Activated CD4-positive, alpha-beta T cell treated with anti-CD3 and anti-CD28 coated beads, Interleukin-2, amount 10 ng/mL, durations not matched to agents 24 days and 14 days (primary cell): ENCODE measurements at regions of chr1 and their contacts with region 1.

Region 1: GRCh38 chr1:32063261-32063681 is 9.5 kb upstream of the TMEM39B start:
- DNase-seq: no peak
- H3K4me3 Mint-ChIP-seq: no peak overlapping the region
- H3K27ac Mint-ChIP-seq: no peak overlapping the region
- H3K4me1 Mint-ChIP-seq: peaks cover 13% of the 10 kb centered on the region
- H3K27me3 Mint-ChIP-seq: no peaks in the 10 kb centered on the region

Region 2: DNA sequence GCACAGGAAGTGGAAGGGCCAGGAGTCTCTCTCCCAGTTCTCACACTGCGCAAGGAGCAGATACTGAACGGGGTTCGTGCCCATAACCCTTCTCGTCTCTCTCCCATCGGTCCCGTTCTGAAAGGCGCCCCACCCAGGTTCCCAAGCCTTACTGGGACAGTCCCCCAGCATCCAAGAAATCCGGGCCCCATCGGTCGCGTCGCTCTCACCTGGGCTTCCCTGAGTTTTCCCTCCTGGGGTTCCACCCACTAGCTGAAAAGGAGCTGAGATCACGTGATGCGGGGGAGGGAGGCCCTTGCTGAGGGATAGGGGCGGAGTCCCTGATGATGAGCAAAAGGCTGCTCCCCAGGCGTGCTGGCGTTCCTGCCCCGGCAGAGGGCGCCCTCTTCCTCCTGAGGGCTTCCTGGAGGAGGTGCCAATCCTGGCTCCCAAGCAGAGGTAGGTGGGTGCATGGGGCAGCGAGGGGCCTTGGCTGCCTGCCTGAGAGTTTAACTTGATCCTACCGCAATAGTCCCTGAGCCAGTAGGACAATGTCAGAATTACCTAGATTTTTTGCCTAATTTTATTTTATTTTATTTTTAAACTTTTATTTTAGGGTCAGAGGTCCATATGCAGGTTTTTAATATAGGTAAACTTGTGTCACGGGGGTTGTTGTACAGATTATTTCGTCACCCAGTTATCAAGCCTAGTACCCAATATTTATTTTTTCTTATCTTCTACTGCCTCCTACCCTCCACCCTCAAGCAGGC is 247.3 kb before region 1 on chr1 and contains the start of gene SPOCD1:
- intact Hi-C with region 1: loop called (anchors 5 kb)
- DNase-seq: peak; percentile 94
- H3K4me3 Mint-ChIP-seq: no peak within 1 kb of the TSS
- H3K27ac Mint-ChIP-seq: no peak within 1 kb of the TSS
- H3K4me1 Mint-ChIP-seq: peaks cover 6% of the 10 kb centered on the region
- H3K27me3 Mint-ChIP-seq: peaks cover 2% of the 10 kb centered on the region
- total RNA-seq, gene SPOCD1: not detected in 2 replicates

Region 3: DNA sequence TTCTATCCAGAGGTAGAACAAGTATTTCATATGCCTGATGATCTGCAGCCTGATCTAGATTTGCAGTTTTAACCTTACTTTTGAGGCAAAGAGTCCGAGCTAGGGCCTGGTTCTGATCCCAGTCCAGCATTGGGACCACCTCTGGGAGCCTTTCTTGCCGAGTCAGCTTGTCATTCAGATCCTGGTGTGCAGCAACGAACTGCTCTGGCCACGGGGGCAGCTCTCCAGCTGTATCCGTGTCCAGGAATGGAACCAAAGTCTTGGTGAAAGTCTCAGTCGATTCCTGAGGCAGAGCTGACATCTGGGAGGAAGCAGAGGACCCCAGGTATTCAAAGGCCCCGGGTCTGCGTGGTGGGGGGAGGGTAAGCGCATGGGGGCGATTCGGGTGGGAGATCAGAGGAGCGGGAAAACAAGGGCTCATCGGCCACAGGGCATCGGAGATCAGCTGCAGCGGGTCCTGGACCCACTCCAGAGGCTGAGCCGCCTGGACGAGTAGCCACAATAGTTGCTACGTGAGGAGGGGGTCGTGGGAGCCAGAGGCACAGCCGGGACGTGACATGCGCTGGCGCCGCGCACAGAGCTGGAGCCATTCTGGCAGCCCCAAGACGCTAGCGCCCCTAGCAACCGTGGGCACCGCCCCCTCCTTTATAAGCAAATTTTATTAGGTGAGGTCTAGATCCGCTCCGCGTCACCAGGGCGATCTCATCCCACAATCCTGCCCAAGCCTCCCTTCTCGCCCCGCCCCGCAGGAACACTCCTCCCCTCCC is 363.4 kb after region 1 on chr1:
- intact Hi-C with region 1: no loop called
- DNase-seq: no peak
- H3K4me3 Mint-ChIP-seq: no peak overlapping the region
- H3K27ac Mint-ChIP-seq: no peak overlapping the region
- H3K4me1 Mint-ChIP-seq: no peaks in the 10 kb centered on the region
- H3K27me3 Mint-ChIP-seq: peaks cover 46% of the 10 kb centered on the region

Region 4: DNA sequence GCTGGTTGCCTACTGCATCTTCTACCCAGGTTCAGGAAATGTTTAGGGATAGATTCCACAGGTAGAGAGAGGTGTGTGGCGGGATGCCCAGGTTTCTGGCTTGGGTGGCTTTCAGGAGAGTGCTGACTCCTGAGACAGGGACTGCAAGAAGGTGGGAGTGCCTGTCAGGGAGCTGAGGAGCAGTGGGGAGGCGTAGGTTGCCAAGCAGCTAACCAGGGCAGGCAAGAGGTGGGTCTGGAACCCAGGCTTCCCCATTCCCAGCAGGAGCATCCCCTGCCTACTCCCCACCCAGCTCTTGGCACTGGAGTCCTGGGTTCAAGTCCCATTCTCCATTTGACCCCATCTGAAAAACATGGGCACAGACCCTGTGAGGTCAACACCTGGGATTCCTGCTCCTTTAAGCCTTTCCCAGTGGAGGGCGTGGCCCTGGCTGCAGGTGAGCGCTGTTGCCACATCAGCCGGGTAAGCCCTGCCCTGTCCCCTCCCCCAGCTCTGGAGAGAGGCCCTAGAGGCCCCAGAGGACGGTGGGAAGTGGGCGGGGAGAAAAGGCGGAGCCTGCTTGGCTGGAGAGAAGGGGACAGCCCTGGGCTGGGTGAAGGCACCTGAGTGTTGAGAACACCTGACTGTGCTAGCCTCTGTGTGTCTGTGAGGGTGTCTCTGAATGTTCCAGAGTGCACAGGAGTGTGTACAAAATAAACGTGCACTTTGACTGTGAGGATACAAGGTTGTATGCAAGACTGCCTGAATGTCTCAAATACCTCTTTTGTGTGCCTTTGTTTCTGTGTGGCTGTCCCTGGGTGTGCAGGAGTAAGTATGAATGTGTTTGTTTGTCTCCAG is 653.3 kb after region 1 on chr1:
- intact Hi-C with region 1: no loop called
- DNase-seq: peak; percentile 91
- H3K4me3 Mint-ChIP-seq: no peak overlapping the region
- H3K27ac Mint-ChIP-seq: no peak overlapping the region
- H3K4me1 Mint-ChIP-seq: peaks cover 6% of the 10 kb centered on the region
- H3K27me3 Mint-ChIP-seq: peaks cover 3% of the 10 kb centered on the region